Lower leg skin (tissue), 4 donors: ENCODE measurements at regions of chr2 and their contacts with region 1.

Region 1: GRCh38 chr2:186503848-186504606 is 18.0 kb downstream of the ZC3H15 start:
- DNase-seq: no peak
- H3K4me3 ChIP-seq: no peak overlapping the region
- CTCF ChIP-seq: no peak
- POLR2A ChIP-seq: no peak

Region 2: GRCh38 chr2:186639939-186640338 is 135.9 kb after region 1 on chr2:
- intact Hi-C with region 1: loop called (anchors 10 kb)
- DNase-seq: no peak
- H3K4me3 ChIP-seq: no peak overlapping the region
- CTCF ChIP-seq: no peak
- POLR2A ChIP-seq: no peak

Region 3: GRCh38 chr2:187878112-187878511 is 1374.1 kb after region 1 on chr2:
- intact Hi-C with region 1: no loop called
- DNase-seq: no peak
- H3K4me3 ChIP-seq: no peak overlapping the region
- CTCF ChIP-seq: no peak
- POLR2A ChIP-seq: no peak